ENCODE measurements at regions of chr18 and their contacts with region 1.

Region 1: GRCh38 chr18:74081966-74082741 is 65.5 kb downstream of the FBXO15 start:
- DNase-seq: peak in 1 of 2 donors; percentile 56
- ATAC-seq: peak; percentile 62
- H3K4me3 ChIP-seq: no peak overlapping the region
- H3K27ac ChIP-seq: no peak overlapping the region
- H3K4me1 ChIP-seq: no peaks in the 10 kb centered on the region
- H3K27me3 ChIP-seq: no peaks in the 10 kb centered on the region

Region 2: DNA sequence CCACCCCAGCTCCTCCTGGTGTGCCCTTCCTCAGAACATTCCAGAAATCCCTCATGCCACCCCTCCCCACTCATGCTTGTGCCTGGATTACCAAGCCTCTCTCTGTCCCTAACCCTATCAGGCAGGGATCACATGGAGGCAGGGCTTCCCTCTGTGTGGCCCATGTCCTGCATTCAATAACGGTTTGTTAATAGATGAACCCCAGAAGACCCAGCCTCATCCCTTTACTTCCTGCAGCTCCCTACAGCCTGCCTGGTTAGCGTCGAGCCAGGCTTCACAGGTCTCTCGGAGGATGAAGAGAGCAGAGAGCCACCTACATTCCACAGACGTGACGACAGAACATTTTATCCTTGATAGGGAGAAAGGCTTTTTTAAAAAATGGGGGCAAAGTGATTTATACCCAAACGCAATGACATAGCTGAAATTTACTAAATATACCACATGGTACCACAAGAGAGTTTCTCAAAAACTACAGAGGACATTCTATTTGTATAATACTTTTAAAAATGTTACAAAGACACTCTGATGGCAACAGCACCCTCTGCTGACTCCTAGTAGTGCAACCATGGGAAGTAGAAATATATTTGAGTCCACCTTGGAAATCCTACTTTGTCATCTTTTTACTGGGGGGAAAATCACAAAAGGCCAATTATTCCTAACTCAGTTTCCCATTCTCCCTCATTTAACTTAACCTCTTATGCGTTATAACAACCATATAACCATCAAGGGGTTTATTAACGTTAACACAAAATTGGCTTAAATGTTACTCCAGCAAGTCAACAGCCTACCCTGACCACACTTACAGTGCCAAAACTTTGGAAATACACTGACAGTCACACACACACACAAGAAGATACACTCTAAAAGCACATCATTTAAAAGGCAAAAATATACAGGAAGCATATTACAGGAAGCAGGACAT is 34.7 kb after region 1 on chr18:
- intact Hi-C with region 1: loop called in 1 of 2 experiments (anchors 5 kb)
- DNase-seq: no peak
- ATAC-seq: no peak
- H3K4me3 ChIP-seq: no peak overlapping the region
- H3K27ac ChIP-seq: no peak overlapping the region
- H3K4me1 ChIP-seq: no peaks in the 10 kb centered on the region
- H3K27me3 ChIP-seq: peaks cover 0 to 2% of the 10 kb centered on the region in 2 donors